Common myeloid progenitor, CD34-positive (primary cell): ENCODE measurements at regions of chr10 and their contacts with region 1.

Region 1: GRCh38 chr10:69644658-69645295 is 14.7 kb downstream of the FAM241B start:
- DNase-seq: peak; percentile 32 to 57 (median 44)
- H3K4me3 ChIP-seq: no peak overlapping the region
- H3K27ac ChIP-seq: no peak overlapping the region
- H3K4me1 ChIP-seq: no peaks in the 10 kb centered on the region
- H3K27me3 ChIP-seq: peaks cover 0 to 14% (median 6%) of the 10 kb centered on the region in 5 experiments

Region 2: GRCh38 chr10:69662271-69662781 is 17.5 kb after region 1 on chr10:
- CTCF ChIA-PET with region 1: interaction called, 15 read pairs
- POLR2A ChIA-PET with region 1: no interaction called
- DNase-seq: no peak
- H3K4me3 ChIP-seq: no peak overlapping the region
- H3K27ac ChIP-seq: no peak overlapping the region
- H3K4me1 ChIP-seq: peaks cover 0 to 2% (median 0%) of the 10 kb centered on the region in 4 experiments
- H3K27me3 ChIP-seq: peaks cover 0 to 21% (median 9%) of the 10 kb centered on the region in 5 experiments

Region 3: DNA sequence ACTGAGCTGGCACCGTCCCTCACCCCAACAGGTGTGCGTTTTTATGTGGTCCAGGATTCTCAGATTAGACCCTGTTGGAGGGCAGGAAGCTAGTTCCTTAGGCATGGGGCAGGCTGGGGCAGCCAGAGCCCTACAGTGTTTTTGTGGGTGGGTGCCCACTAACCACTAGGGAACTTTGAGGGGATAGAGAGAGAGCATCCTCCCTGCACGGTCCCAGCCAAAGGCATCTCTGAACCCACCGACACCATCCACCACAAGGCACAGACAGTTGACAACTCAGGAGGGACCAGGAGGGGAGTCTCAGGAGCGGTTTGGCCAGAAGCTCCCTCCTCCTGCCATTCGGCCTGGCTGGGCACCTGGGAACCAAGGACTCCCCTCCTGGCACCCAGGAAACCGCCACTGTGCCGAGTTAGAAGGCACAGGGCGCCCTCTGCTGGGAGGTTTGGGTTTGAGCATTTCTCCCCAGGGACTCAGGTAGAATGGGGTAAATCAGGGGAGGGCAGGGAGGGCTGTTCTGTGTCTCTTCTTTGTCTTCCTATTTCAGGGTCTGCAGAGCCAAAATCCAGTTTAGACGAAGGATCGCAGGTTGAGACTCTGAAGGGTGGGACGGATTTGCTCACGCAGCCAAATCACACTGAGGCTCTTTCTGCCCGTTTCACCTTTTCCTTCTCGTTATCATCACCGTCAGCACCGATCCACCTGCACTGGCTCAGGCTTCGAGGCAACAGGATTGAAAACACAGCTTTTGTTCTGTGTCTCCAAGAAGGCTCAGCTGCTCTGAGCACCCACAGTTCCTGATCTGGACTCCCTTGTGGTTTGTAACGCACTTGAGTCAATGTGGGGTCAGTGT is 72.2 kb after region 1 on chr10:
- CTCF ChIA-PET with region 1: interaction called, 74 read pairs
- POLR2A ChIA-PET with region 1: interaction called, 3 read pairs
- DNase-seq: peak; percentile 23 to 42 (median 23)
- H3K4me3 ChIP-seq: no peak overlapping the region
- H3K27ac ChIP-seq: no peak overlapping the region
- H3K4me1 ChIP-seq: no peaks in the 10 kb centered on the region
- H3K27me3 ChIP-seq: peaks cover 0 to 5% (median 0%) of the 10 kb centered on the region in 5 experiments

Region 4: GRCh38 chr10:69757553-69758309 is 113.0 kb after region 1 on chr10:
- CTCF ChIA-PET with region 1: no interaction called
- POLR2A ChIA-PET with region 1: no interaction called
- DNase-seq: peak in 1 of 3 donors; percentile 4
- H3K4me3 ChIP-seq: no peak overlapping the region
- H3K27ac ChIP-seq: no peak overlapping the region
- H3K4me1 ChIP-seq: peaks cover 0 to 4% (median 0%) of the 10 kb centered on the region in 4 experiments
- H3K27me3 ChIP-seq: no peaks in the 10 kb centered on the region

Region 5: GRCh38 chr10:69914398-69915214 is 269.8 kb after region 1 on chr10:
- CTCF ChIA-PET with region 1: interaction called, 14 read pairs
- POLR2A ChIA-PET with region 1: no interaction called
- DNase-seq: peak; percentile 44 to 78 (median 68)
- H3K4me3 ChIP-seq: no peak overlapping the region
- H3K27ac ChIP-seq: no peak overlapping the region
- H3K4me1 ChIP-seq: peaks cover 0 to 4% (median 0%) of the 10 kb centered on the region in 4 experiments
- H3K27me3 ChIP-seq: no peaks in the 10 kb centered on the region